ENCODE measurements at regions of chr3 and their contacts with region 1.

Region 1: DNA sequence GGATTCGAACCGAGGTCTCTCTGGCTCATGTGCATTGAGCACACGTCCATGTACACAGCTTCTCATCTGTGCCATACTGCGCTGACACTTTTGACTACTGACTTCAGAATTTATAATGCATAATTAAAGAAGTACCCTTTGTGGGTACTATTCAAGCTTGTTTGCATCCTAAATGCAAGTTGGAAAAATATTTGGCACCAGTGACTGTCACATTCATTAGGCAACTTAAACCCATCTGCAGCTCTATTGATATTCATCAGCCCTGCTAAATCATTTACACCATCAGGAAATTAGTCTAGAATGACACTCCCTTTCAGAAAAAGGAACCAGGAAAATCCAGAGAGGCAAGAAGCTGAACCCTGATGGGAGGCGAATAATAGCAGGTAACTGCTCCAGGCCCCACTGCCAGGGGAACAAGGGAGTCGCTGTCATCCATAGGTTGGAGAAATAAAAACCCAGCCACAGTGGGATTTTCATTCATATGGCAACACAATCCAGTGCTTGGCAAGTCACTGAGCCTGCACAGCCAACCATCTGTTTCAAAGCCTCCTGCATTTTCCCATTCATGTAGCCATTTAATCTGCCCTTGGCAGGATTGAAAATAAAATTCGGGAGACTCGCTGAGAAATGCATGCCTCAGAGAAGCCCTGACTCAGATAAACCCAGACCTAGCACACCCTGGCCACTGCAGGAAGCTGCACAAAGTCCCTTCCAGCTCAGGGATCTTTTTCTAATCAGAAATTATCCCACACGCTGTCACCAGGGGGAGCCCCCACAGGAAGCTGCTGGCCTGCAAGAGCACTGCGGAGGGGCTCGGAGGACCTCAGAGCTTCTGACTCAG is 103.0 kb upstream of the VEPH1 start:
- DNase-seq: peak; percentile 56
- ATAC-seq: peak; percentile 66
- H3K4me3 ChIP-seq: no peak overlapping the region
- H3K4me3 Mint-ChIP-seq: no peak overlapping the region
- H3K27ac ChIP-seq: no peak overlapping the region
- H3K27ac Mint-ChIP-seq: no peak overlapping the region
- H3K4me1 ChIP-seq: no peaks in the 10 kb centered on the region
- H3K4me1 Mint-ChIP-seq: peaks cover 3% of the 10 kb centered on the region
- H3K27me3 ChIP-seq: no peaks in the 10 kb centered on the region
- H3K27me3 Mint-ChIP-seq: peaks cover 39% of the 10 kb centered on the region
- CTCF ChIP-seq: peak; percentile 86

Region 2: DNA sequence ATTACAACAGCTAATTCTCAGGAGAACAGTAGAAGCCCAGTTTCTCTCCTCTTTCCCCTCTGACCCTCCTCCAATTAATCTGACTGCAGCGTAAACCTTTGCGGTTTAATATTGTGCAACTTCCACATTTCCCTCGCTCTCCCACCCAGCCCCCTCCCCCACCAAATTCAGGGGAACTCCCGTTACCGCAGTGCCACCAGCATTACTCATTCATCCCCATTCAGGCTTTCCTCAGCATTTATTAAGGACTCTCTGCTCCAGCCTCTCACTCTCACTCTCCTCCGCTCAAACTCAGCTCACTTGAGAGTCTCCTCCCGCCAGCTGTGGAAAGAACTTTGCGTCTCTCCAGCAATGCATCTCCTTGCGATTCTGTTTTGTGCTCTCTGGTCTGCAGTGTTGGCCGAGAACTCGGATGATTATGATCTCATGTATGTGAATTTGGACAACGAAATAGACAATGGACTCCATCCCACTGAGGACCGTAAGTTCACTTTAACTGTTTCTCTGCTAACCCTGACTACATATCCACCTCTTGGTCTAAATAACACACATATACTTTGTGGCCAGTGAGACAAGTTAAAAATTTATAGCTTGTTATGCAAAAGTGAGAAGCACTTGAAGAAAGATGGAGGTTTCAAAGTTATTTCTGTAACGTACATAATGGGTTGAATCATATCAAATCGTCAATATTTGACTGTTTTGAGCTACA is 169.5 kb before region 1 on chr3 and contains the start of gene PTX3:
- CTCF ChIA-PET with region 1: no interaction called
- POLR2A ChIA-PET with region 1: no interaction called
- intact Hi-C with region 1: no loop called
- DNase-seq: no peak
- ATAC-seq: no peak
- H3K4me3 ChIP-seq: peak within 1 kb of the TSS in 1 of 5 experiments; percentile 28
- H3K4me3 Mint-ChIP-seq: no peak within 1 kb of the TSS
- H3K27ac ChIP-seq: no peak within 1 kb of the TSS
- H3K27ac Mint-ChIP-seq: no peak within 1 kb of the TSS
- H3K4me1 ChIP-seq: peaks cover 9 to 12% of the 10 kb centered on the region in 2 donors
- H3K4me1 Mint-ChIP-seq: peaks cover 7% of the 10 kb centered on the region
- H3K27me3 ChIP-seq: peaks cover 0 to 16% (median 11%) of the 10 kb centered on the region in 4 experiments
- H3K27me3 Mint-ChIP-seq: peaks cover 33% of the 10 kb centered on the region
- CTCF ChIP-seq: no peak
- total RNA-seq, gene PTX3: 0.36 and 0.37 TPM in 2 replicates

Region 3: DNA sequence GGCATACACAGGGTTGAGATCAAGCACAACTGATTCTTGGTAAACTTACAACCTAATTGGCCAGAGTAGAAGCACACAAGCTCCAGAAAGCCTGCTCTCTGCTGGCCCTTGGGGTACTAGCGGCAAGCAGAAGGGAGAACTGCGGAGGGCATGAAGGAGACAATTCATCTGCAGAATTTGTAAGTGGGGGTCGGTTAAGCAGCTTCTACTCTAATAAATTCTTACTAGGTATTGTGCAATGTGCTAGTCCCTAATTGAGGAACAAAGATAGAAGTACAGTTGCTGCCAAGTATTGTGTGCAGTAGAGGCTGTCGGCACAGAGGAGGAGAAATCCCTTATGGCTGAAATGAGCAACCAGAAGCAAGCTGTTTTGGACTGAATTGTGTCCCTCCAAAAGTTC is 11.8 kb before region 1 on chr3:
- CTCF ChIA-PET with region 1: interaction called, 10 read pairs
- POLR2A ChIA-PET with region 1: no interaction called
- intact Hi-C with region 1: no loop called
- DNase-seq: no peak
- ATAC-seq: no peak
- H3K4me3 ChIP-seq: no peak overlapping the region
- H3K4me3 Mint-ChIP-seq: no peak overlapping the region
- H3K27ac ChIP-seq: no peak overlapping the region
- H3K27ac Mint-ChIP-seq: no peak overlapping the region
- H3K4me1 ChIP-seq: no peaks in the 10 kb centered on the region
- H3K4me1 Mint-ChIP-seq: no peaks in the 10 kb centered on the region
- H3K27me3 ChIP-seq: peaks cover 0 to 4% (median 0%) of the 10 kb centered on the region in 4 experiments
- H3K27me3 Mint-ChIP-seq: peaks cover 17% of the 10 kb centered on the region
- CTCF ChIP-seq: no peak

Region 4: GRCh38 chr3:157618075-157618760 is 12.0 kb after region 1 on chr3:
- CTCF ChIA-PET with region 1: interaction called, 10 read pairs
- POLR2A ChIA-PET with region 1: no interaction called
- intact Hi-C with region 1: no loop called
- DNase-seq: peak; percentile 62
- ATAC-seq: peak; percentile 84
- H3K4me3 ChIP-seq: no peak overlapping the region
- H3K4me3 Mint-ChIP-seq: no peak overlapping the region
- H3K27ac ChIP-seq: no peak overlapping the region
- H3K27ac Mint-ChIP-seq: no peak overlapping the region
- H3K4me1 ChIP-seq: no peaks in the 10 kb centered on the region
- H3K4me1 Mint-ChIP-seq: peaks cover 4% of the 10 kb centered on the region
- H3K27me3 ChIP-seq: peaks cover 0 to 4% (median 0%) of the 10 kb centered on the region in 4 experiments
- H3K27me3 Mint-ChIP-seq: peaks cover 31% of the 10 kb centered on the region
- CTCF ChIP-seq: peak; percentile 80

Region 5: GRCh38 chr3:158532099-158532734 is 926.0 kb after region 1 on chr3:
- CTCF ChIA-PET with region 1: interaction called, 8 read pairs
- POLR2A ChIA-PET with region 1: no interaction called
- intact Hi-C with region 1: loop called (anchors 5 kb)
- DNase-seq: peak; percentile 20
- ATAC-seq: no peak
- H3K4me3 ChIP-seq: no peak overlapping the region
- H3K4me3 Mint-ChIP-seq: no peak overlapping the region
- H3K27ac ChIP-seq: no peak overlapping the region
- H3K27ac Mint-ChIP-seq: no peak overlapping the region
- H3K4me1 ChIP-seq: no peaks in the 10 kb centered on the region
- H3K4me1 Mint-ChIP-seq: no peaks in the 10 kb centered on the region
- H3K27me3 ChIP-seq: no peaks in the 10 kb centered on the region
- H3K27me3 Mint-ChIP-seq: no peaks in the 10 kb centered on the region
- CTCF ChIP-seq: peak; percentile 57